CD4-positive, alpha-beta memory T cell (primary cell): ENCODE measurements at regions of chr5 and their contacts with region 1.

Region 1: GRCh38 chr5:35089334-35090314 is 41.9 kb upstream of the AGXT2 start:
- DNase-seq: peak; percentile 44 to 53 (median 46)
- H3K4me3 ChIP-seq: no peak overlapping the region
- H3K4me3 Mint-ChIP-seq: no peak overlapping the region
- H3K27ac ChIP-seq: no peak overlapping the region
- H3K27ac Mint-ChIP-seq: peak overlapping the region in 1 of 7 donors; percentile 32
- H3K4me1 ChIP-seq: no peaks in the 10 kb centered on the region
- H3K4me1 Mint-ChIP-seq: no peaks in the 10 kb centered on the region
- H3K27me3 ChIP-seq: no peaks in the 10 kb centered on the region
- H3K27me3 Mint-ChIP-seq: peaks cover 4 to 5% of the 10 kb centered on the region in 2 donors

Region 2: DNA sequence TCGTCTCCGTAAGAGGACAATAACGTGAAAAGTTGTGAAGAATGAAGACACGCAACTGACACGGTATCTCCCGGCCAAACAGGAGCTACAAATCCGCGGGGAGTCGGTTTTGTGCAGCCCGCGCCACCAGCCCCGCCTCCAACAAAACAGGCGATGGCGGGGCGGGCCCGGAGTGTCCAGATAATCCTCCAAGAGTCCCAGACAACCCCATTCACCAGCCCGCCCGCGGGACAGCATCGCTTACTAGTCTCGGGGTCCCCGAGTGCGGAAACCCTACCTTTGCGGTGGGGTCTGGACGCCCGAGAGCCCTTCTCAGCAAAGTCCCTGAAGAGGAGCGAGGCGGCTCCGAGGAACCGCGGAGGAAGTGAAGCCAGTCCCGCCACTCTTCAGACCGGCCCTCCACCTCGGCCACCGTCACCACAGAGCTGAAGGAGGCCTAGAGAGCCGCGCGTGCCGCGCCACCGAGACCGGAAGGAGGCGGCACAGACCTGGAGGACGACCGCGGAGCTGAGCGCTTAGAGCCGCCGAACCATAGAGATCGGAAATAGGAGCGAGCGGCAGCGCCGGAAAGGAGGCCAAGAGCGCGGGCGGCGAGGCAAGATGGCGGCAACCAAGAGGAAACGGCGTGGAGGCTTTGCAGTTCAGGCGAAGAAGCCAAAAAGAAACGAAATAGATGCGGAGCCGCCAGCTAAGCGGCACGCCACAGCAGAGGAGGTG is 174.3 kb before region 1 on chr5 and contains the starts of genes BRIX1 and RAD1:
- CTCF ChIA-PET with region 1: no interaction called
- POLR2A ChIA-PET with region 1: no interaction called
- intact Hi-C with region 1: no loop called
- DNase-seq: peak; percentile 92 to 94 (median 94)
- H3K4me3 ChIP-seq: peak within 1 kb of the TSS; percentile 84 to 95
- H3K4me3 Mint-ChIP-seq: peak within 1 kb of the TSS in 4 of 8 donors; percentile 52 to 69 (median 66)
- H3K27ac ChIP-seq: peak within 1 kb of the TSS; percentile 75
- H3K27ac Mint-ChIP-seq: peak within 1 kb of the TSS in 2 of 7 donors; percentile 68 to 81
- H3K4me1 ChIP-seq: peaks cover 40% of the 10 kb centered on the region
- H3K4me1 Mint-ChIP-seq: peaks cover 19 to 37% (median 24%) of the 10 kb centered on the region in 4 donors
- H3K27me3 ChIP-seq: no peaks in the 10 kb centered on the region
- H3K27me3 Mint-ChIP-seq: no peaks in the 10 kb centered on the region
- total RNA-seq, gene BRIX1: 27.1 to 30.9 TPM
- total RNA-seq, gene RAD1: 22.7 to 26.3 TPM

Region 3: GRCh38 chr5:35182541-35183535 is 93.2 kb after region 1 on chr5:
- CTCF ChIA-PET with region 1: no interaction called
- POLR2A ChIA-PET with region 1: no interaction called
- intact Hi-C with region 1: loop called (anchors 1 kb)
- DNase-seq: peak; percentile 4 to 37 (median 13)
- H3K4me3 ChIP-seq: no peak overlapping the region
- H3K4me3 Mint-ChIP-seq: no peak overlapping the region
- H3K27ac ChIP-seq: no peak overlapping the region
- H3K27ac Mint-ChIP-seq: no peak overlapping the region
- H3K4me1 ChIP-seq: no peaks in the 10 kb centered on the region
- H3K4me1 Mint-ChIP-seq: no peaks in the 10 kb centered on the region
- H3K27me3 ChIP-seq: no peaks in the 10 kb centered on the region
- H3K27me3 Mint-ChIP-seq: peaks cover 4 to 5% of the 10 kb centered on the region in 2 donors

Region 4: DNA sequence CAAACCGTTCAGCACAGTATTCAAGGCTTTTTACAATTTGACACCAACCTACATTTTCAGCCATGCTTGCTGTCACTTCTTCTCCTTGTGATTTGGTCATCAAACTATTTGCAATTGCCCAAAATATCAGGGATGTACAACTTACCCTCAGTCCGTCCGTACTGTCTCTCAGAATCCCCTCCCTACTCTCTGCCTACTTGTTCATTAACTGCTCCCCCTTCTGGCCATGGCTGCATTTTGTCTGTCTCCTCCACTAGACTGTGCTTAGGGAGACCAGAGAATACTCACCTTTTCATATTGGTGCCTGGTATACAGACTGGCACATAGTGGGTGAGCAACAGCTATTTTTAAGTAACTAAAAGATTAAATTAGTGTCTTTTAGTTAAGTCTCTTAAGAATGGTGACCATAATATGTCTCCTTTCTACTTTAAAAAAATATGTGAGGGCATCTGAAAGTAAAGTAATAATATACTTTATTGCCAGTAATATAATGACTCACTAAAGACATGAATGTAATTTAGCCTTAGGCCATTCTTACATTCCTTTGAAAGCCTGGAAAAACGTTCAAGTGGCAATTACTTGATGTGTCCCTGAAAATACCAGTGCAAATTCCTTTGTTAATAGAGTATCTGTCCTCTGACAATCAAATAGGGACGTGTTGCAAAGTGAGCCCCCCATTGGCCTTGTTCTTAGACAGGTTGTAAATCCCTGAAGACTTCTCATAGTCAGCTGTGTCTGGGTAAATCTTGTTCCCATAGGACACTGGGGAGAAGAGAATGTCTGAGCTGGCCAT is 112.9 kb after region 1 on chr5:
- CTCF ChIA-PET with region 1: no interaction called
- POLR2A ChIA-PET with region 1: no interaction called
- intact Hi-C with region 1: loop called (anchors 1 kb)
- DNase-seq: peak in 4 of 5 donors; percentile 5 to 12 (median 10)
- H3K4me3 ChIP-seq: no peak overlapping the region
- H3K4me3 Mint-ChIP-seq: no peak overlapping the region
- H3K27ac ChIP-seq: no peak overlapping the region
- H3K27ac Mint-ChIP-seq: no peak overlapping the region
- H3K4me1 ChIP-seq: no peaks in the 10 kb centered on the region
- H3K4me1 Mint-ChIP-seq: peaks cover 0 to 2% (median 0%) of the 10 kb centered on the region in 4 donors
- H3K27me3 ChIP-seq: no peaks in the 10 kb centered on the region
- H3K27me3 Mint-ChIP-seq: peaks cover 15 to 23% of the 10 kb centered on the region in 2 donors

Region 5: GRCh38 chr5:35617435-35618303 is 528.0 kb after region 1 on chr5 and contains the start of gene SPEF2:
- CTCF ChIA-PET with region 1: no interaction called
- POLR2A ChIA-PET with region 1: no interaction called
- intact Hi-C with region 1: loop called (anchors 10 kb)
- DNase-seq: peak; percentile 78 to 84 (median 81)
- H3K4me3 ChIP-seq: peak within 1 kb of the TSS; percentile 73 to 83
- H3K4me3 Mint-ChIP-seq: peak within 1 kb of the TSS; percentile 92 to 98 (median 95)
- H3K27ac ChIP-seq: peak within 1 kb of the TSS; percentile 57
- H3K27ac Mint-ChIP-seq: peak within 1 kb of the TSS; percentile 81 to 99 (median 96)
- H3K4me1 ChIP-seq: peaks cover 23% of the 10 kb centered on the region
- H3K4me1 Mint-ChIP-seq: peaks cover 19 to 41% (median 27%) of the 10 kb centered on the region in 4 donors
- H3K27me3 ChIP-seq: no peaks in the 10 kb centered on the region
- H3K27me3 Mint-ChIP-seq: no peaks in the 10 kb centered on the region
- total RNA-seq, gene SPEF2: 14.2 to 15.4 TPM